Panc1 (cell line): ENCODE measurements at regions of chr11 and their contacts with region 1.

Region 1: GRCh38 chr11:43311791-43312607 is at the start of gene API5:
- DNase-seq: peak; percentile 79
- ATAC-seq: peak; percentile 100
- H3K4me3 ChIP-seq: peak within 1 kb of the TSS; percentile 85 to 98
- H3K27ac ChIP-seq: peak within 1 kb of the TSS; percentile 91
- H3K4me1 ChIP-seq: peaks cover 7% of the 10 kb centered on the region; the same call in 1 of the 2 replicates
- H3K27me3 ChIP-seq: no peaks in the 10 kb centered on the region
- CTCF ChIP-seq: peak; percentile 91
- total RNA-seq, gene API5: 102 TPM

Region 2: DNA sequence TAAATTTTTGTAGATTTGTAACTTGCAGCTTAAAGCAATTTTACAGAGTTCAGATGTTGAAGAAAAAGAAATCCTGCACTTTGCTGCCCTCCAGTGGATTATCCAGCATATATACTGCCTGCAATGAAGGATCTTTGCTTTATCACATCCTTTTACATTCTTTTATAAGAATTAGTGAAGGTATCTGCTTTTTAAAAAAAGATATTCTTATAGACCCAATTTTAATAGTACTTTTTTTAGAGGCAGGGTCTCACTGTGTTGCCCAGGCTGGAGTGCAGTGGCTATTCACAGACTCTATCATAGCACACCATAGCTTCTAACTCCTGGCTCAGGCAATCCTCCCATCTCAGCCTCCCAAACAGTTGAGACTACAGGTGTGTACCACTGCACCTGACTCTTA is 107.5 kb after region 1 on chr11:
- CTCF ChIA-PET with region 1: no interaction called
- POLR2A ChIA-PET with region 1: no interaction called
- in situ Hi-C with region 1: no loop called
- intact Hi-C with region 1: loop called (anchors 5 kb)
- DNase-seq: peak; percentile 15
- ATAC-seq: 0 out of 2 replicates have a peak, but pooled peaks have one; percentile 74
- H3K4me3 ChIP-seq: no peak overlapping the region
- H3K27ac ChIP-seq: no peak overlapping the region
- H3K4me1 ChIP-seq: no peaks in the 10 kb centered on the region
- H3K27me3 ChIP-seq: no peaks in the 10 kb centered on the region
- CTCF ChIP-seq: peak; percentile 78

Region 3: DNA sequence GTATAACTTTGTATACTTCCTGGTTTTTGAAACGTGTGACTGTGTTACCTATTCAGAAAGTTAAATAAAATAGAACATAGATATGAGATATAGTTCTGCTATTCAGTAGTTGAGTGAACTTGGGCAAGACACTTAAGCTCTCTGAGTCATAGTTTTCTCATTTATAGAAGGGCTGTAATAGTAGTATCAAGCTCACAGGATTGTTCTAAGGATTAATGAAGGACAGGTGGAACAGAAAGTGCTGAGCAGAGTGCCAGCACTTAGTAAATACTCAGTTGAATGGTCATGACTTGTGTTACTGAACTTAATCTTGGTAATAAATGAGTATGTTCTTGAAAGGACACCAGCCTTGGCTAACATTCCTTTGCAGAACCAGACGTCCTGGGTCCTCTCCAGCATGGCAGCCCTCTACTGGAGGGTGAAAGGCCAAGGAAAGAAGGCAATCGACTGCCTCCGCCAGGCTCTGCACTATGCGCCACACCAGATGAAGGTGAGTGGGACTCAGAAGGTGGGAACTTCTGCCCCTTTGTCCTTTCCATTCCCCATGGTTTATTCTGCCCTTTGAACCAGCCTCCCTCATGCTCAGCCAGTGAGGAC is 178.0 kb after region 1 on chr11:
- CTCF ChIA-PET with region 1: no interaction called
- POLR2A ChIA-PET with region 1: no interaction called
- in situ Hi-C with region 1: no loop called
- intact Hi-C with region 1: no loop called
- DNase-seq: no peak
- ATAC-seq: no peak
- H3K4me3 ChIP-seq: no peak overlapping the region
- H3K27ac ChIP-seq: no peak overlapping the region
- H3K4me1 ChIP-seq: no peaks in the 10 kb centered on the region
- H3K27me3 ChIP-seq: no peaks in the 10 kb centered on the region
- CTCF ChIP-seq: no peak

Region 4: GRCh38 chr11:43557553-43558110 is 245.6 kb after region 1 on chr11:
- CTCF ChIA-PET with region 1: interaction called, 11 read pairs
- POLR2A ChIA-PET with region 1: no interaction called
- in situ Hi-C with region 1: no loop called
- intact Hi-C with region 1: no loop called
- DNase-seq: no peak
- ATAC-seq: peak; percentile 54; the same call in 1 of the 2 replicates
- H3K4me3 ChIP-seq: no peak overlapping the region
- H3K27ac ChIP-seq: no peak overlapping the region
- H3K4me1 ChIP-seq: peaks cover 7% of the 10 kb centered on the region
- H3K27me3 ChIP-seq: peaks cover 47% of the 10 kb centered on the region
- CTCF ChIP-seq: peak; percentile 30; the same call in 1 of the 2 replicates